PC-9 (cell line): ENCODE measurements at regions of chr10 and their contacts with region 1.

Region 1: DNA sequence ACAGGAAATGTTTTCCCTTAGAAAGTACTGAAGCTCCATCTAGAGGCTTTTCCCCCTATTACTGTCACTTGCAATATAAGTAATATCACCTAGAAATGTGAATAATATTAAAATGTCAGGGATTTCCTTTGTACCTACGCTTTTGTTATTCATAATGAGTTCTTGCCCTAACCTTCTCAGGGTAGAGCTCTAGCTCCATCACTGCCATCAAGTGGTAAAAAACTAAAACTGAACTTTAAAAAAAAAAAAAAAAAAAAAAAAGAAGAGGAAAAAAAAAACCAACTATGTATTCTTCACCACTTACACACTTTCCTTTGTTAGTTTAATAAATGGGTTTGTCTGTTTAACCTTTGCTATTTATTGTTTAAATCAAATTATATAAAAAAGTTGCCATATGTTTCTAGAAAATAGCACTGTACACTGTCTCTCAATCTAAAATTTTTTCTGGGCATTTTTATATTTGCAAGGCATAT is 49.9 kb downstream of the DNAJC1 start:
- DNase-seq: peak in 1 of 2 experiments; percentile 79
- H3K4me3 ChIP-seq: no peak overlapping the region
- H3K27ac ChIP-seq: no peak overlapping the region
- H3K4me1 ChIP-seq: no peaks in the 10 kb centered on the region
- H3K27me3 ChIP-seq: no peaks in the 10 kb centered on the region
- CTCF ChIP-seq: peak; percentile 62

Region 2: DNA sequence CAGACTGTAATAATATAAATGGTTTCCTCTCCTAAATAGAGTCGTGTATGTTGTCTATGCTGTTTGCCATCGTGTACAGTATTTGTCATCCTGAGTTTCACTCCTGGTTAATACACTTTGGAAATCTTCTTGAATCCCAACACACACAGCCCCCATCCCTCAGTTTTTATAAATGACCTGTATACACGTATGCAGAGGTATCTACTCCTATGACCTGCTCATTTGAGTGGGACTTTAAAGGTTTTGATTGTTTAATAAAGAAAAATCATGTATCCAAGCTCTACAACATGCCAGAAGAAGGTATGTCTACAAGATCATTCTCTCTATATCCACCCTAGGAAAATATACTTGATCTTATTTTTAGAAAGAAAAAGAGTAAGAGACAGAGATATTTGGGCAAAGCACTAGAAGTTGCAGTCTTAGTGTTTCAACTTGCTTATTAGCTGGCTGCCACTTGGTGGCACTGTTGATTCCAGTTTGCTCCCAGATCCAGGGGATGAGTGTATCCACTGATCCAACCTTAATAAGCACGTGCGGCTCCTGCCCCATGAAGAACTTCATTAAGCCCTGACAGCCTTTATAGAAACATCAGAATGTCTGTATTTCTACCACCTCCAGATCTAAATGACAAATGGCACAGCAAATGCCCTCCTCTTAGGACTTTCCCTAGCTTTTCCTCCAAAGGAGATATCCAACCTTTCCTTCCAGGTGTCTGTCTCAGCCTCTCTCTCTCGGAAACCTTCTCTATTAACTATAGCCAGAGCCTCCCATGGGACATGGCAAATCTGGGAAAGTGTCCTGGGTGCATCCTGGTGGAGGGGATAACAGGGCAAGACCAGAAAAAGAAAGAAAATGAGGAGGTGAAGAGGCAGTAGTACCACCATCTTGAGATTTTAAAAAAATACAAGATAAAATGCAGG is 875.0 kb before region 1 on chr10:
- CTCF ChIA-PET with region 1: no interaction called
- POLR2A ChIA-PET with region 1: interaction called, 4 read pairs
- intact Hi-C with region 1: loop called (anchors 1 kb)
- DNase-seq: peak; percentile 54 to 68
- H3K4me3 ChIP-seq: no peak overlapping the region
- H3K27ac ChIP-seq: no peak overlapping the region
- H3K4me1 ChIP-seq: peaks cover 9% of the 10 kb centered on the region
- H3K27me3 ChIP-seq: no peaks in the 10 kb centered on the region
- CTCF ChIP-seq: peak; percentile 81

Region 3: GRCh38 chr10:21278491-21279239 is 675.0 kb before region 1 on chr10:
- CTCF ChIA-PET with region 1: no interaction called
- POLR2A ChIA-PET with region 1: no interaction called
- intact Hi-C with region 1: loop called (anchors 1 kb)
- DNase-seq: peak; percentile 71 to 90
- H3K4me3 ChIP-seq: no peak overlapping the region
- H3K27ac ChIP-seq: 0 out of 2 replicates have a peak overlapping the region, but pooled peaks have one; percentile 25
- H3K4me1 ChIP-seq: peaks cover 19% of the 10 kb centered on the region
- H3K27me3 ChIP-seq: no peaks in the 10 kb centered on the region
- CTCF ChIP-seq: peak; percentile 89

Region 4: GRCh38 chr10:21570761-21571521 is 382.7 kb before region 1 on chr10:
- CTCF ChIA-PET with region 1: no interaction called
- POLR2A ChIA-PET with region 1: interaction called, 38 read pairs
- intact Hi-C with region 1: no loop called
- DNase-seq: no peak
- H3K4me3 ChIP-seq: no peak overlapping the region
- H3K27ac ChIP-seq: no peak overlapping the region
- H3K4me1 ChIP-seq: no peaks in the 10 kb centered on the region
- H3K27me3 ChIP-seq: no peaks in the 10 kb centered on the region
- CTCF ChIP-seq: no peak

Region 5: GRCh38 chr10:22193945-22194344 is 240.3 kb after region 1 on chr10:
- CTCF ChIA-PET with region 1: no interaction called
- POLR2A ChIA-PET with region 1: no interaction called
- intact Hi-C with region 1: no loop called
- DNase-seq: no peak
- H3K4me3 ChIP-seq: no peak overlapping the region
- H3K27ac ChIP-seq: no peak overlapping the region
- H3K4me1 ChIP-seq: no peaks in the 10 kb centered on the region
- H3K27me3 ChIP-seq: no peaks in the 10 kb centered on the region
- CTCF ChIP-seq: no peak